GM12878 (cell line): ENCODE measurements at regions of chr10 and their contacts with region 1.

Region 1: GRCh38 chr10:123413353-123413752 is 252.8 kb upstream of the GPR26 start:
- DNase-seq: no peak
- ATAC-seq: peak; percentile 31; the same call in 1 of the 3 replicates
- H3K4me3 ChIP-seq: no peak overlapping the region
- H3K27ac ChIP-seq: no peak overlapping the region
- H3K4me1 ChIP-seq: no peaks in the 10 kb centered on the region
- H3K27me3 ChIP-seq: no peaks in the 10 kb centered on the region
- CTCF ChIP-seq: peak in 2 of 3 experiments; percentile 27 to 34; a peak in 4 of 6 replicates
- EP300 ChIP-seq: no peak
- POLR2A ChIP-seq: no peak
- RAD21 ChIP-seq: peak; percentile 59

Region 2: GRCh38 chr10:123429706-123430221 is 16.4 kb after region 1 on chr10:
- CTCF ChIA-PET with region 1: interaction called, 6 read pairs
- POLR2A ChIA-PET with region 1: interaction called, 3 read pairs
- RAD21 ChIA-PET with region 1: no interaction called
- SMC1A ChIA-PET with region 1: interaction called, 13 read pairs
- in situ Hi-C with region 1: no loop called
- intact Hi-C with region 1: no loop called
- DNase-seq: no peak
- ATAC-seq: no peak
- H3K4me3 ChIP-seq: no peak overlapping the region
- H3K27ac ChIP-seq: no peak overlapping the region
- H3K4me1 ChIP-seq: no peaks in the 10 kb centered on the region
- H3K27me3 ChIP-seq: no peaks in the 10 kb centered on the region
- CTCF ChIP-seq: no peak
- EP300 ChIP-seq: no peak
- POLR2A ChIP-seq: no peak
- RAD21 ChIP-seq: no peak